ENCODE measurements at regions of chr19 and their contacts with region 1.

Region 1: DNA sequence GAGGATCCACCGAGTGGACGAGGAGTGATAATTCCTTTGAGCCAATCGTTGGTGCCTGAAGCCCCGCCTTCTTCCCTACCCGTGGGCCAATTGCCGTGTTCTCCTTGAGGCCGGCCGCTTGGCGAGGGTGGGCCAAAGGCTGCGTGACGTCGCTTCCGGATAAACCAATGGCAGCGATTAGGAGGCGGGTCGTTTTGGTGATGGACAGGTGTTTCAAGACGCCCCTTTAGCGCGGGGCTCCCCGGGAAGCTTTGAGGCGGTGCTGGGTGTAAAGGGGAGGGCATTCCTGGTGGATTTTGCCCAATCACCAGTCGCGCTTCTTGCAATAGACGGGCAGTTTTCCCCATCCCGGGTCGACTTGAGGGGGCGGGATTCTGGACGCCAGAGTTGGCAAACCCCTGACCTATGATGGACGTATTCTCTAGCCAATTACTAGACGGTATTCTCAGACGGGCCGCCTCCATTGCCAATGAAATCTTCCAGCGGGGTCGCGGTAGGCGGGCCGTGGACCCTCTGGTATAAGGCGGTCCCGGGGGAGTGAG is 310 bp upstream of the PRMT1 start:
- DNase-seq: peak; percentile 100
- ATAC-seq: peak; percentile 69
- H3K4me3 ChIP-seq: peak overlapping the region; percentile 88 to 98 (median 97)
- H3K4me3 Mint-ChIP-seq: peak overlapping the region; percentile 100
- H3K27ac ChIP-seq: peak overlapping the region; percentile 93 to 98
- H3K27ac Mint-ChIP-seq: peak overlapping the region; percentile 96
- H3K4me1 ChIP-seq: peaks cover 42 to 78% of the 10 kb centered on the region in 2 donors
- H3K4me1 Mint-ChIP-seq: peaks cover 64% of the 10 kb centered on the region
- H3K27me3 ChIP-seq: no peaks in the 10 kb centered on the region
- H3K27me3 Mint-ChIP-seq: no peaks in the 10 kb centered on the region
- CTCF ChIP-seq: no peak

Region 2: GRCh38 chr19:49331616-49332055 is 345.1 kb before region 1 on chr19:
- CTCF ChIA-PET with region 1: no interaction called
- POLR2A ChIA-PET with region 1: no interaction called
- intact Hi-C with region 1: loop called (anchors 5 kb)
- DNase-seq: peak; percentile 83
- ATAC-seq: peak; percentile 29
- H3K4me3 ChIP-seq: peak overlapping the region in 1 of 5 experiments; percentile 35
- H3K4me3 Mint-ChIP-seq: peak overlapping the region; percentile 65
- H3K27ac ChIP-seq: peak overlapping the region; percentile 93 to 98
- H3K27ac Mint-ChIP-seq: peak overlapping the region; percentile 99
- H3K4me1 ChIP-seq: peaks cover 79 to 89% of the 10 kb centered on the region in 2 donors
- H3K4me1 Mint-ChIP-seq: peaks cover 82% of the 10 kb centered on the region
- H3K27me3 ChIP-seq: no peaks in the 10 kb centered on the region
- H3K27me3 Mint-ChIP-seq: no peaks in the 10 kb centered on the region
- CTCF ChIP-seq: no peak

Region 3: GRCh38 chr19:49497047-49497788 is 179.5 kb before region 1 on chr19:
- CTCF ChIA-PET with region 1: interaction called, 50 read pairs
- POLR2A ChIA-PET with region 1: interaction called, 4 read pairs
- intact Hi-C with region 1: loop called (anchors 1 kb)
- DNase-seq: peak; percentile 92
- ATAC-seq: peak; percentile 9
- H3K4me3 ChIP-seq: peak overlapping the region; percentile 74 to 99 (median 98)
- H3K4me3 Mint-ChIP-seq: peak overlapping the region; percentile 98
- H3K27ac ChIP-seq: peak overlapping the region; percentile 97 to 99
- H3K27ac Mint-ChIP-seq: peak overlapping the region; percentile 99
- H3K4me1 ChIP-seq: peaks cover 32 to 61% of the 10 kb centered on the region in 2 donors
- H3K4me1 Mint-ChIP-seq: peaks cover 71% of the 10 kb centered on the region
- H3K27me3 ChIP-seq: no peaks in the 10 kb centered on the region
- H3K27me3 Mint-ChIP-seq: no peaks in the 10 kb centered on the region
- CTCF ChIP-seq: no peak

Region 4: DNA sequence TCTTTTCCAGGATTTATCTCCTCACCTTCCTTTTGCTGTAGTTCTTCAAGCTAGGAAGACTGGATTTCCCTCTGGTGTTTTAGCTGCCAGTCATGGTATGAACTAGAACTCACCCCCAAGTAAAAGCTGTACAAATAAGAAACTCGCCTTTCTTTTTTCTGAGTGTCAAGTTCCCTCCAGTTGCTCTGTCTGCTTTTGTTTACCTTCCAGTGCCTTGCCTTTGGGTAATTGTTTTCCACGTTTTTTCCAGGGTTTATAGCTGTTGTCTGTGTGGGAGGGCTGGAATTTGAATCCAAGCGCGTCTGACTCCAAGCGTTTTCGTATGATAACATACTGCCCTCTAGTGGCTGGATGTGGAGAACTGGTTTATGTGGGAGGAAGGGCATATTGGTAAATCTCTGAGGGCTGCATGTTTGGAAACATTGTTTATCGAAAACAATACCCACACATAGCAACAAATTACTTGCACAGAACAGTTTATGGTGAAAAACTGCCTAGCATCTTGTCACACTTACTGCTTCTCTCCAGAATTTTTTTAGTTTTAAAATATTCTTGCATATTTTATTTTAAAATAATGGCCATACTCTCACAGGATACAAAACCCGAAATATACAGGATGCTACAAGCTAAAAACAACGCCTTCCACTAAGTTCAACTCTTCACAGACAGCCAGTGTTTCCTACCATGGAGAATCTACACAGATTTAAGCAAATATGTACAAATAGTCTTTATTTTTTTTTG is 129.8 kb before region 1 on chr19:
- CTCF ChIA-PET with region 1: interaction called, 28 read pairs
- POLR2A ChIA-PET with region 1: no interaction called
- intact Hi-C with region 1: no loop called
- DNase-seq: peak; percentile 88
- ATAC-seq: peak; percentile 63
- H3K4me3 ChIP-seq: peak overlapping the region in 2 of 5 experiments; percentile 1 to 18
- H3K4me3 Mint-ChIP-seq: peak overlapping the region; percentile 73
- H3K27ac ChIP-seq: no peak overlapping the region
- H3K27ac Mint-ChIP-seq: peak overlapping the region; percentile 79
- H3K4me1 ChIP-seq: peaks cover 4 to 8% of the 10 kb centered on the region in 2 donors
- H3K4me1 Mint-ChIP-seq: peaks cover 13% of the 10 kb centered on the region
- H3K27me3 ChIP-seq: no peaks in the 10 kb centered on the region
- H3K27me3 Mint-ChIP-seq: no peaks in the 10 kb centered on the region
- CTCF ChIP-seq: peak; percentile 91

Region 5: GRCh38 chr19:49640113-49640898 is 36.5 kb before region 1 on chr19 and contains the start of gene RRAS:
- CTCF ChIA-PET with region 1: interaction called, 10 read pairs
- POLR2A ChIA-PET with region 1: interaction called, 53 read pairs
- intact Hi-C with region 1: loop called (anchors 1 kb)
- DNase-seq: peak; percentile 100
- ATAC-seq: peak; percentile 69
- H3K4me3 ChIP-seq: peak within 1 kb of the TSS; percentile 35 to 97 (median 80)
- H3K4me3 Mint-ChIP-seq: peak within 1 kb of the TSS; percentile 95
- H3K27ac ChIP-seq: peak within 1 kb of the TSS; percentile 91 to 96
- H3K27ac Mint-ChIP-seq: peak within 1 kb of the TSS; percentile 95
- H3K4me1 ChIP-seq: peaks cover 37 to 55% of the 10 kb centered on the region in 2 donors
- H3K4me1 Mint-ChIP-seq: peaks cover 53% of the 10 kb centered on the region
- H3K27me3 ChIP-seq: no peaks in the 10 kb centered on the region
- H3K27me3 Mint-ChIP-seq: no peaks in the 10 kb centered on the region
- CTCF ChIP-seq: no peak
- total RNA-seq, gene RRAS: 5.6 and 6.3 TPM in 2 replicates

Region 6: GRCh38 chr19:49655570-49656455 is 20.9 kb before region 1 on chr19:
- CTCF ChIA-PET with region 1: no interaction called
- POLR2A ChIA-PET with region 1: no interaction called
- intact Hi-C with region 1: no loop called
- DNase-seq: no peak
- ATAC-seq: no peak
- H3K4me3 ChIP-seq: no peak overlapping the region
- H3K4me3 Mint-ChIP-seq: no peak overlapping the region
- H3K27ac ChIP-seq: no peak overlapping the region
- H3K27ac Mint-ChIP-seq: no peak overlapping the region
- H3K4me1 ChIP-seq: no peaks in the 10 kb centered on the region
- H3K4me1 Mint-ChIP-seq: no peaks in the 10 kb centered on the region
- H3K27me3 ChIP-seq: no peaks in the 10 kb centered on the region
- H3K27me3 Mint-ChIP-seq: no peaks in the 10 kb centered on the region
- CTCF ChIP-seq: no peak

Region 7: GRCh38 chr19:49817964-49818648 is 141.3 kb after region 1 on chr19 and contains the start of gene MED25:
- CTCF ChIA-PET with region 1: no interaction called
- POLR2A ChIA-PET with region 1: no interaction called
- intact Hi-C with region 1: loop called (anchors 2 kb)
- DNase-seq: peak; percentile 98
- ATAC-seq: peak; percentile 56
- H3K4me3 ChIP-seq: peak within 1 kb of the TSS; percentile 69 to 99 (median 94)
- H3K4me3 Mint-ChIP-seq: peak within 1 kb of the TSS; percentile 97
- H3K27ac ChIP-seq: peak within 1 kb of the TSS; percentile 89 to 98
- H3K27ac Mint-ChIP-seq: peak within 1 kb of the TSS; percentile 98
- H3K4me1 ChIP-seq: peaks cover 13 to 29% of the 10 kb centered on the region in 2 donors
- H3K4me1 Mint-ChIP-seq: peaks cover 41% of the 10 kb centered on the region
- H3K27me3 ChIP-seq: no peaks in the 10 kb centered on the region
- H3K27me3 Mint-ChIP-seq: no peaks in the 10 kb centered on the region
- CTCF ChIP-seq: peak; percentile 44
- total RNA-seq, gene MED25: 123 and 126 TPM in 2 replicates